ENCODE measurements at regions of chr14 and their contacts with region 1.

Region 1: GRCh38 chr14:69827560-69827959 is 30.5 kb upstream of the SLC10A1 start:
- DNase-seq: no peak
- H3K4me3 ChIP-seq: no peak overlapping the region
- H3K27ac ChIP-seq: no peak overlapping the region
- H3K4me1 ChIP-seq: no peaks in the 10 kb centered on the region
- H3K27me3 ChIP-seq: no peaks in the 10 kb centered on the region

Region 2: DNA sequence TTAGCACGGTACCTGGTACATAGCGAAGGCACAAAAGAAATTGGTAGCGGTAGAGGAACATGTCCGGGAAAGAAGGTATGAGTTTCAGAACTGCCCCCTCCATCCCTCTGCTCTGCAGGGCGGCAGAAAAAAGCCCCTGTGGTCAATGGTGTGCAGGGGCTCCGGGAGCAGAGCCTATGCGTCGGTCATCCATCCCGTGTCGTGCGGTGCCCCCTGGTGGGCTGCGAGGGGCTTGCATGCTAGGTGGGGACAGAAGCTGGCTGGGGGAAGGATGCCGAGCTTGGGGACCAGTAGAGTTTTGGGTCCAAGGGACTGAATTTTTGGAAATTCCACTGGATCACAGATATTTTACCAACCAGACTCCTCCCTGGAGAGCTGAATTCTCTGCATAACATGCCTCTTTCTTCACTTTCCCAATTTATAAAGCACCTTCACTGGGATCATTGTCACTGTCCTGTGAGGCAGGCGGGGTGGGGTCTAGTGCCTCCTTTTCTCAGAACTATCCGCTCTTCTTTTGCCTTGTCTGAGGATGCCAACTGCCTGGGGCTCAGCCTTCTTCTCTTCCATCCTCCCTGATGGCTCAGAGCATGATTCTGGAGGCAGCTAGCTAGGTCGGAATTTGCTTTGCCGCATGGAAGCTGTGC is 200.3 kb after region 1 on chr14:
- in situ Hi-C with region 1: loop called (anchors 10 kb)
- DNase-seq: peak; percentile 57
- H3K4me3 ChIP-seq: no peak overlapping the region
- H3K27ac ChIP-seq: no peak overlapping the region
- H3K4me1 ChIP-seq: no peaks in the 10 kb centered on the region
- H3K27me3 ChIP-seq: no peaks in the 10 kb centered on the region